Heart left ventricle (tissue), 16 donors: ENCODE measurements at regions of chr1 and their contacts with region 1.

Region 1: GRCh38 chr1:231949277-231950091 is 322.9 kb downstream of the DISC1 start:
- DNase-seq: peak in 1 of 5 donors; percentile 35
- ATAC-seq: peak in 3 of 4 donors; percentile 61 to 83 (median 71)
- H3K4me3 ChIP-seq: no peak overlapping the region
- H3K27ac ChIP-seq: peak overlapping the region in 8 of 12 donors; percentile 2 to 54 (median 30)
- H3K4me1 ChIP-seq: peaks cover 0 to 12% (median 4%) of the 10 kb centered on the region in 12 donors
- H3K27me3 ChIP-seq: no peaks in the 10 kb centered on the region
- CTCF ChIP-seq: no peak
- POLR2A ChIP-seq: no peak

Region 2: DNA sequence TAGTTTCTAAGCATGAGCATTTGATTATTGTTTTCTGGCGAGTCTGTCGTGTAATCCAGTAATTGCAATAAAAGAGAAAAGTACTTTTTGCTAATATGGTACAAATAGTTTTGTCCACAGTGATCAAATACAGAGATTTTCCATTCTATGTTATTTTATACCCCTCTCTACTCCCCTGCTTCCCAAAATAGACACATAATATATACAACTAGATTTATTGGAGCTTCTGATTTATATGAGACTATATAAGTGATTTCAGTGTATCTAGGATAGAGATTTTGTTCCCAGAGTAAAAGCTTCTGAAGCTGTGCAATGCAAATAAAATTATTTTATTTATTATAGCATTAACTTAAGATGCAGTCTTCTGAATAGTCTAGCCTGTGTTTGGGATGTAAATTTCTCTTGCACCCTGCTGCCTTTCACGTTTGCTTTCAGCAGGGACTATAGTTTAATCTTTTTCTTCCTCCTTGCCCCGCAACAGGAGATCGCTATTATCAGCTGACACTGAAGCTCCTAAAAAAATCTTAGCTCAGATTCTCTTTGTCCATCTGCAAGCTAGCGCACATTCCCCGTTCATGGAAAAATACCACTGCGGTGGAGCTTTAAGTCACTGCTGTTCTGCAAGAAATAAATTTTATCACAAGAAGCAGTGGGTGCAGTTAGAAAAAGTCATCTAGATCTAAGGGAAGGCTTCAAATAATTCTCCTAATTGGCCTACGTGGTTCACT is 49.6 kb before region 1 on chr1:
- intact Hi-C with region 1: loop called in 1 of 10 experiments (anchors 10 kb)
- DNase-seq: no peak
- ATAC-seq: no peak
- H3K4me3 ChIP-seq: no peak overlapping the region
- H3K27ac ChIP-seq: no peak overlapping the region
- H3K4me1 ChIP-seq: peaks cover 0 to 4% (median 0%) of the 10 kb centered on the region in 12 donors
- H3K27me3 ChIP-seq: no peaks in the 10 kb centered on the region
- CTCF ChIP-seq: no peak
- POLR2A ChIP-seq: no peak